PC-3 (cell line): ENCODE measurements at regions of chr2 and their contacts with region 1.

Region 1: DNA sequence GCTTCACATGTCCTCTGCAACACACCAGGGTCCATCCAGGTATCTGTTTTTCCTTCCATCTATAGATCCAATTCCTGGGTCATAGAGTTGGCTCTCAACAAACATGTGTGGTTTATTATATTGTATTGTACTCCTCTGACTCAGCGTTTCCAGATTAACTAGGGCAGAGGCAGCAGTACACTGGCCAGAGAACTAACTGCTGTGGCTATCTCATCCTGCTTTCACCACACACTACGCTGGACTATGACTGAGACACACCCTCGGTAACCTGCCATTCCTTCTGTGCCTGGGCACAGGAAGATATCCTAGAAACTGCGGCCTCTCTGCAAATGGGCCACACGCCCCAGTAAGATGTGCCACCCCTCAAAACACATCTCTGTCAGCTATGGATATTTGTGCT is 159.8 kb upstream of the STK17B start:
- DNase-seq: peak; percentile 95
- ATAC-seq: peak; percentile 77
- H3K4me3 ChIP-seq: peak overlapping the region; percentile 17; the same call in 1 of the 2 replicates
- H3K27ac ChIP-seq: peak overlapping the region; percentile 62
- H3K4me1 ChIP-seq: peaks cover 46% of the 10 kb centered on the region
- H3K27me3 ChIP-seq: no peaks in the 10 kb centered on the region
- CTCF ChIP-seq: no peak

Region 2: GRCh38 chr2:196314780-196315179 is 16.4 kb before region 1 on chr2:
- CTCF ChIA-PET with region 1: no interaction called
- POLR2A ChIA-PET with region 1: no interaction called
- intact Hi-C with region 1: loop called (anchors 1 kb)
- DNase-seq: peak; percentile 70
- ATAC-seq: peak; percentile 69
- H3K4me3 ChIP-seq: no peak overlapping the region
- H3K27ac ChIP-seq: peak overlapping the region; percentile 90
- H3K4me1 ChIP-seq: peaks cover 29% of the 10 kb centered on the region
- H3K27me3 ChIP-seq: no peaks in the 10 kb centered on the region
- CTCF ChIP-seq: peak; percentile 27; the same call in 1 of the 2 replicates